Mucosa of descending colon (tissue), 3 donors: ENCODE measurements at regions of chr3 and their contacts with region 1.

Region 1: DNA sequence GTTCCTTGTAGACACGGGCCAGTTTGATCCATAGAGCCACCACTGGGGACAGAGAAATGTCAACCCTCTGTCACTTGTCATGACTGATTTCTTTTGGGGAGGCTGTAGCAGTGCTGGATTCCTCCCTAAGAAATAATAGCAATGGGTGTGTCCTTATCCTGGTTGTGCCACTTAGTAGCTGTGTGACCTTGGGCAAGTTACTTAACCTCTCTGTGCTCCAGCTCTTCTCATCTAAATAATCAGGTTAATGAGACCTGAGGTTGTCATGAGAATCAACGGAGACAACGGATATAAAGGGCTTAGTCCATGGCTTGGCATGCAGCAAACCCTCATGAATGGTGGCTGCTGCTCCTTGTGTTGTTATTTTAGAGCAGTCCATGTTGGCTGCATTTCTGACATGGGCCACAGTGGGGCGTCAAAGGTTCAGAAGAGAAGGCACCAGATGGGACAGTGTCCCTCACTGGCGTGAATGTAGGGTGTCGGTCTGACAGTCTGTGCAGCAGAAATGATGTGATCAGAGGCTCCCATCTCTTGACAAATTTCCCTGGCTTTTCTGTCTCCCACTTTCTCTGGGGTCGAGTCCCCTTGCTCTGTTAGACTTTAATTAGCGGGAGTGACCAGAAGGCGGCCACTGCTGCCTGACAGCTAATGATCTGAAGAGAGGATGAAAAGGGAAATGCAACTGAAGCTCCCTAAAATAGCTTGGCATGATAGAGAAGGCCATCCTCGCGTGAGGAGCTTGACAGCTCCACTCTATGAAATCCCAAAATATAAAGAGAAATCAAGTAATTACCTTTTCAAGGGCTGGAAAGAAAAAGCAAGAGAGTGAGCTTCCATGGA is 209.4 kb downstream of the CADPS start:
- DNase-seq: peak; percentile 52 to 90 (median 85)
- ATAC-seq: peak; percentile 93
- H3K4me3 ChIP-seq: no peak overlapping the region
- H3K4me1 ChIP-seq: no peaks in the 10 kb centered on the region
- CTCF ChIP-seq: peak; percentile 51

Region 2: GRCh38 chr3:62538706-62539356 is 127.0 kb before region 1 on chr3:
- intact Hi-C with region 1: no loop called
- DNase-seq: no peak
- ATAC-seq: no peak
- H3K4me3 ChIP-seq: no peak overlapping the region
- H3K4me1 ChIP-seq: no peaks in the 10 kb centered on the region
- CTCF ChIP-seq: no peak

Region 3: DNA sequence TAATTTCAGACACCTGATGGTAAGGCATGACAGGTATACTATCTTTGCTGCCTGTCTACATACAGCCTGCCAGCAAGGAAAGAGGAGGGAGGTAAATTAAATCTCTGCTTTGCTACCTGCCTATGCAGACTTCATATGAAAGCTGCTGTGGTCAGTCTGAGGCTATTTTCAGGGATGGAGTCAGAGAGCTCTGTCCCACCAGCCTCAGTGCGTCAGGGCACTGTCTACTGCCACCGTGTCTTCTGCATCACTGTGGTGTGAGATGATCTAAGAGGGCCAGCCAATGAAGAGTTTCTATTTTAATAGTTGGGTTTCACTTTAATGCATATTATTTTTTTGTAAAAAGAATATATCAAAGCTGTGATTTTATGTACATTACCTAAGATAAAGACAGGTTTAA is 83.8 kb after region 1 on chr3:
- intact Hi-C with region 1: loop called in 1 of 2 experiments (anchors 5 kb)
- DNase-seq: no peak
- ATAC-seq: no peak
- H3K4me3 ChIP-seq: no peak overlapping the region
- H3K4me1 ChIP-seq: no peaks in the 10 kb centered on the region
- CTCF ChIP-seq: no peak

Region 4: GRCh38 chr3:63103843-63104242 is 438.0 kb after region 1 on chr3:
- intact Hi-C with region 1: no loop called
- DNase-seq: no peak
- ATAC-seq: no peak
- H3K4me3 ChIP-seq: no peak overlapping the region
- H3K4me1 ChIP-seq: no peaks in the 10 kb centered on the region
- CTCF ChIP-seq: no peak

Region 5: GRCh38 chr3:63193629-63194028 is 527.8 kb after region 1 on chr3:
- intact Hi-C with region 1: loop called in 1 of 2 experiments (anchors 5 kb)
- DNase-seq: peak in 1 of 3 donors; percentile 16
- ATAC-seq: peak; percentile 61
- H3K4me3 ChIP-seq: no peak overlapping the region
- H3K4me1 ChIP-seq: no peaks in the 10 kb centered on the region
- CTCF ChIP-seq: no peak